Common myeloid progenitor, CD34-positive (primary cell): ENCODE measurements at regions of chr10 and their contacts with region 1.

Region 1: DNA sequence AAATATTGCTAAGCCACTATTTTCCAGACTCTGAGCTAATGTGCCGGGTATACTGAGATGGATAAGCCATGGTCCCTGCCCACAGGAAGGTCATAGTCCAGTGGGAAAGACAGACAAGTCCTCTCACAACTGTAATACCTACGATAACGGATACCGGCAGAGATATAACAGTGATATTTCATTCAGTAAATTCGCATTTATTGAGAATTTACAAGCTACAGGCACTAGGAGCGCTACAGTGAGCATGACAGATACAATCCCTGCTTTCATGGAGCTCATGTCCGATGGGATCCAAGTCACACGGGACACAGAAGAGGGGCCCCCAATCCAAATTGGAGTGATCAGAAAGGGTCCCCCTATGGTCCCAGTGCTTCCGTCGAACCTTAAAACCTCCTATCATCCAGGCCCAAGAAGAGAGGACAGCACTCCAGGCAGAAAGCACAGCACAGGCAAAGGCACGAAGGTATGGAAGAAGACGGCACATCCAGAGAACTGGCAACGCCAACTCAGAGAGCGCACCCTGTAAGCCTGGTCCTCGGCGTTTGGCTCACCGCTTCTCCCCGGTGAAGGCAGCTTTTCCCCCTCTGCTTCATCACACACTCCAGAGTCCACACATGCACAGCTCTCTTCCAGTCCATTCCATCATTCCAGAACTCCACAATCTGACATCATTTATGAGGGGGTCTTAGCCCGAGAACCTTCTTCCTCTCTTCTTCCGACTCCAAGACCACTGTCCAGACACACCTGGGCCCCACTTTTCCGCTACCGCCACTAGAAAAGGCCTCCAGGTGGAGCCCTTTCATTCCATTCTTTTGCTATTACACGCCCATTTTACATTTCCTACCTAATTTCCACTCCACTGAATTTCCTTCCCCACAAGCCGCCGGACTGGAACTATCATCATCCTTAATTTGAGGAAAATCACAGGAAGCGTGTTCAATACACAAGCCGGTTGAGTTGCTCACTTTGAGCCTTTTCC is 47.9 kb upstream of the NKX2-3 start:
- DNase-seq: peak in 2 of 3 donors; percentile 17 to 21
- H3K4me3 ChIP-seq: no peak overlapping the region
- H3K27ac ChIP-seq: no peak overlapping the region
- H3K4me1 ChIP-seq: peaks cover 0 to 11% (median 2%) of the 10 kb centered on the region in 4 experiments
- H3K27me3 ChIP-seq: no peaks in the 10 kb centered on the region

Region 2: DNA sequence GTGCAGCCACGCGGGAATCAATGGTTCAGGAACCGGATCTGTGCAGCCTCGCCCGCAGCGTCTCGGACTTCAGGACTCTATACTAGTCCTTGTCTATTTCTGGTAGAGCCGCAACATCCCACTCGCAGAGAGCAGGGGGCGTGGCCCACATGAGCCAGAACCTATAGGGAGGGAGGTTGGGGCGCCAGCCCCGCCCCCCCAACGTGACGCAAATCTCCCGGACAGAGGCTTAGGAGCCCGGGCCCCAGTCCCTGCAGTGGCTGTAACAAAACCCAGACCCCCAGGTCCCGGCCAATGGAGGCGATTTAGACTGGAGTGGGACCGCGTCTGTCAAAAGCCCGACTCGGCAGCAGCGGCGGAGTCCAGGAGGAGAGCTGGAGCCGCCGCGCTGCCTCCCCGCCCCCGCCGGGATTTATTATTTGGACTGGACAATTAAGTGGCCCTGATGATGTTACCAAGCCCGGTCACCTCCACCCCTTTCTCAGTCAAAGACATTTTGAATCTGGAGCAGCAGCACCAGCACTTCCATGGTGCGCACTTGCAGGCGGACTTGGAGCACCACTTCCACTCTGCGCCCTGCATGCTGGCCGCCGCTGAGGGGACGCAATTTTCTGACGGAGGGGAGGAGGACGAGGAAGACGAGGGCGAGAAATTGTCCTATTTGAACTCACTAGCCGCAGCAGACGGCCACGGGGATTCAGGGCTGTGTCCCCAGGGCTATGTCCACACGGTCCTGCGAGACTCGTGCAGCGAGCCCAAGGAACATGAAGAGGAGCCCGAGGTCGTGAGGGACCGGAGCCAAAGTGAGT is 48.0 kb after region 1 on chr10 and contains the start of gene NKX2-3:
- CTCF ChIA-PET with region 1: interaction called, 16 read pairs
- POLR2A ChIA-PET with region 1: no interaction called
- DNase-seq: peak; percentile 95 to 97 (median 96)
- H3K4me3 ChIP-seq: peak within 1 kb of the TSS; percentile 47 to 96 (median 83)
- H3K27ac ChIP-seq: peak within 1 kb of the TSS; percentile 72 to 93
- H3K4me1 ChIP-seq: peaks cover 8 to 88% (median 73%) of the 10 kb centered on the region in 4 experiments
- H3K27me3 ChIP-seq: peaks cover 0 to 22% (median 0%) of the 10 kb centered on the region in 5 experiments

Region 3: GRCh38 chr10:99548041-99548530 is 63.2 kb after region 1 on chr10:
- CTCF ChIA-PET with region 1: interaction called, 17 read pairs
- POLR2A ChIA-PET with region 1: no interaction called
- DNase-seq: peak in 2 of 3 donors; percentile 74
- H3K4me3 ChIP-seq: no peak overlapping the region
- H3K27ac ChIP-seq: no peak overlapping the region
- H3K4me1 ChIP-seq: peaks cover 0 to 15% (median 13%) of the 10 kb centered on the region in 4 experiments
- H3K27me3 ChIP-seq: peaks cover 0 to 2% (median 0%) of the 10 kb centered on the region in 5 experiments

Region 4: DNA sequence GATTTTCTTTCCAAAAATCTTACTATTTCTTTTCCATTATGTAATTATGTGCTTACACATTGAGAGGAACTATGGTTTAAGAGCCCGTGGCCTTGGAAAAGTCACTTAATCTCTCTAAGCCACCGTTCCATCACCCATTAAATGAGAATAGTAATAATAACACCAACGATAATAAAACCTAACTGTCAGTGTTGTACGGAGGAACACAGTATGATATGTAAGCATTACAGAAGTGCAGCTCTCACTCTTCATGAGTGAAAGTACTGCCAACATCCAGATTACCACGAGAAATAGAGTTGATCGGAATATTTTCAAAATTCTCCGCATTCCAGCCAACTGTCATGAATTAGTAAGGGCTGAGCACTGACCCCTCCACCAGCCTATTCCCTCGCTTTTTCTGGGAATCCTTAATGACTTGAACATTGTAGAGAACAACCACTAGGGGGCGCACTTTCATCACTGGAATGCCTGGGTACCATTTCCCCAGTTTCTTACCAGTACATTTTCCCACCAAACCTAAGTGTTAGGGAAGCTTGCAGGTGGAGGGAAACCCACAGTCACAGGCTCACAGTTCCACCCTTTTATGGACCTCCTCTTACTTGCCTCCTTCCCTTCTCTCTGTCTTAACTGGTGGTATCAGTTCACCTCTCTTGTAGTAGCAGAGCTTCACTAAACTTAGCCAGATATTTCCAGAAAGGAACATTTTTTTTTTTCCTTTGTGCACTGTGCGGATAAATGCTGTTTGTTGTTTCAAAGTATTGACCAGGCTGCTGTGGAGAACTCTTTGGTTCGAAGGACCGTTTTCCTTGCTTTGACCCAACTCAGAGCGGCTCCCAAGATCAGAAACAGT is 75.6 kb after region 1 on chr10:
- CTCF ChIA-PET with region 1: interaction called, 12 read pairs
- POLR2A ChIA-PET with region 1: no interaction called
- DNase-seq: peak in 2 of 3 donors; percentile 42 to 51
- H3K4me3 ChIP-seq: no peak overlapping the region
- H3K27ac ChIP-seq: no peak overlapping the region
- H3K4me1 ChIP-seq: peaks cover 0 to 7% (median under 1%) of the 10 kb centered on the region in 4 experiments
- H3K27me3 ChIP-seq: no peaks in the 10 kb centered on the region